GM12878 (cell line): ENCODE measurements at regions of chr2 and their contacts with region 1.

Region 1: GRCh38 chr2:169798718-169799592 is at the start of gene SSB:
- DNase-seq: peak; percentile 85
- ATAC-seq: peak; percentile 98
- H3K4me3 ChIP-seq: peak within 1 kb of the TSS; percentile 80
- H3K27ac ChIP-seq: peak within 1 kb of the TSS; percentile 85
- H3K4me1 ChIP-seq: no peaks in the 10 kb centered on the region; the same call in 1 of the 2 replicates
- H3K27me3 ChIP-seq: no peaks in the 10 kb centered on the region
- CTCF ChIP-seq: no peak
- EP300 ChIP-seq: 0 out of 4 replicates have a peak, but pooled peaks of 1 of the 2 experiments have one; percentile 26
- POLR2A ChIP-seq: peak; percentile 90
- RAD21 ChIP-seq: no peak
- polyA plus RNA-seq, gene SSB: 294 to 313 TPM

Region 2: GRCh38 chr2:169528271-169528701 is 270.7 kb before region 1 on chr2:
- CTCF ChIA-PET with region 1: interaction called, 4 read pairs
- POLR2A ChIA-PET with region 1: no interaction called
- RAD21 ChIA-PET with region 1: no interaction called
- SMC1A ChIA-PET with region 1: interaction called, 6 read pairs
- in situ Hi-C with region 1: no loop called
- intact Hi-C with region 1: loop called (anchors 10 kb)
- DNase-seq: peak; percentile 45
- ATAC-seq: peak; percentile 100
- H3K4me3 ChIP-seq: no peak overlapping the region
- H3K27ac ChIP-seq: no peak overlapping the region
- H3K4me1 ChIP-seq: no peaks in the 10 kb centered on the region
- H3K27me3 ChIP-seq: no peaks in the 10 kb centered on the region
- CTCF ChIP-seq: peak; percentile 82 to 88 (median 82)
- EP300 ChIP-seq: no peak
- POLR2A ChIP-seq: no peak
- RAD21 ChIP-seq: peak; percentile 70

Region 3: GRCh38 chr2:169815849-169816248 is 16.9 kb after region 1 on chr2:
- CTCF ChIA-PET with region 1: interaction called, 3 read pairs
- POLR2A ChIA-PET with region 1: interaction called, 5 read pairs
- RAD21 ChIA-PET with region 1: no interaction called
- SMC1A ChIA-PET with region 1: interaction called, 13 read pairs
- in situ Hi-C with region 1: no loop called
- intact Hi-C with region 1: no loop called
- DNase-seq: no peak
- ATAC-seq: no peak
- H3K4me3 ChIP-seq: no peak overlapping the region
- H3K27ac ChIP-seq: no peak overlapping the region
- H3K4me1 ChIP-seq: no peaks in the 10 kb centered on the region
- H3K27me3 ChIP-seq: no peaks in the 10 kb centered on the region
- CTCF ChIP-seq: no peak
- EP300 ChIP-seq: no peak
- POLR2A ChIP-seq: no peak
- RAD21 ChIP-seq: no peak

Region 4: DNA sequence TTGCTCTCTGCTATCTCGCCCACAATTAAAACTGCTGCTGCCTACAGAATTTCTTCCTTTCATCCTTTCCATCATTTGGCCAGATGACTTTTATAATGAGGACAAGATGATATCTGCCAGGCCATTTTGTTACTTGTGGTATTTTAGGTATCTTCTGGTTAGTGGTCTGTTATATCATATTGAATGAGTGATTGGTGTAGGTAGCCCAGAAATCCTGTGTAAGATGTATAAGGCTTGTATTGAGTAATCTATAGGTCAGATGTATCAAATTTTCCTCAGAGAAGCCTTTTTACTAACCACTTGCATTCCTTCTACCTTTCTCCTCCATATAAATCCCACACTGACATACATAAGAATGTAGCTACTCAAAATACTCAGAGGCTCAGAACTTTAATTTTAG is 146.6 kb after region 1 on chr2:
- CTCF ChIA-PET with region 1: no interaction called
- POLR2A ChIA-PET with region 1: no interaction called
- RAD21 ChIA-PET with region 1: no interaction called
- SMC1A ChIA-PET with region 1: no interaction called
- in situ Hi-C with region 1: no loop called
- intact Hi-C with region 1: no loop called
- DNase-seq: no peak
- ATAC-seq: no peak
- H3K4me3 ChIP-seq: no peak overlapping the region
- H3K27ac ChIP-seq: no peak overlapping the region
- H3K4me1 ChIP-seq: no peaks in the 10 kb centered on the region
- H3K27me3 ChIP-seq: no peaks in the 10 kb centered on the region
- CTCF ChIP-seq: no peak
- EP300 ChIP-seq: no peak
- POLR2A ChIP-seq: no peak
- RAD21 ChIP-seq: no peak